ENCODE measurements at regions of chr9 and their contacts with region 1.

Region 1: DNA sequence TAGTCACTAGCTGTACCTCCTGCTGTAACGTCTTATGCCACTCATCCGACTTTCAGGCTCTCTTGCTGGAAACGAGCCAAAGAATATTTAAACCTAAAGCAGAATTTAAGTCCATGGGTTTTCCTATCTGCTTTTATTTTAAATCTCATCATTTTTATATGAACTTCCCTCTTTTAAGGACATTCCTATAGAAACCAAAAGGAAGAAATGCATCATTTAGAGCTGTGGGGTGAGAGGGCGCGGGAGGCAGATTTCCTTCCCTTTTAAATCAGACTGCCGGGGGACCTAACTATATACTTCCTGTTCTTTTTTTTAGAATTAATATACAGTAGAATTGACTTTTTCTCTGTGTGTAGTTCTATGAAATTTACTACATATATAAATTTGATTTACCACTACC is 468.8 kb downstream of the BNC2 start:
- DNase-seq: no peak
- ATAC-seq: peak in 1 of 4 donors; percentile 31
- H3K4me3 ChIP-seq: no peak overlapping the region
- H3K27ac ChIP-seq: no peak overlapping the region
- H3K4me1 ChIP-seq: no peaks in the 10 kb centered on the region
- H3K27me3 ChIP-seq: no peaks in the 10 kb centered on the region
- CTCF ChIP-seq: no peak

Region 2: DNA sequence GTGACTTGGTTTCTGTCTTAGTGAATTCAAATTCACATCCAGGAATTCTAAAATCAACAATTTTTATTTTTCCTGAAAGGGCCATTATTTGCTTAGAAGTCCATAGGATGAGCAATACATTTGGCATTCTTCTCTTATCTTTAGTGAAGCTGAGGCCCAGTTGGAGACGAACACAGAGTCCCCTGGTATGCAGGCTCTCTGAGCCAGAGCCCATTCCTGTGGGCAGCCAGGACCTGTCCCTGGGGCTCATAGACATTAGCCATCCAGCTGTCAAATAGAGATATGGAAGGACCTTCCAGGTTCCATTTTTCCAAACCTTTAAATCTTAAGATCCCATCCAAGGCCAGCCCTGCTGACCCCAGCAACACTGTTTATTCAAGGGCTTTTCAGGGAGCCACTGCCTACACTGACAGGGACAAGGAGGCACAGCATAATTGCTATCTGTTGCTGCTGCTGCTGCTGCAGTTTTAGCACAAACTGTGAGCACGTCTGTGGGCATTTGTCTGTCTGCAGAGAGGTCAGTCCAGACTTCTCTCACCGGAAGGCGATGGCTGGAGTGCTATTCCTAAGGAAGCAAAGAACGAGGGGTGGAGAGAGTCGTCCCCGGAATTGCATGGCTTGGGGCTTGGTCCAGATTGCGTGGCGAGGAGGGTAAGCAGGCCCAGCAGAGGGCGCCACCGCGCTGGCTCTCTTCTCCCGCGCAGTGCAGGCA is 209.9 kb before region 1 on chr9:
- intact Hi-C with region 1: loop called in 1 of 3 experiments (anchors 10 kb)
- DNase-seq: peak in 5 of 6 donors; percentile 16 to 87 (median 57)
- ATAC-seq: peak; percentile 68 to 95 (median 86)
- H3K4me3 ChIP-seq: no peak overlapping the region
- H3K27ac ChIP-seq: no peak overlapping the region
- H3K4me1 ChIP-seq: no peaks in the 10 kb centered on the region
- H3K27me3 ChIP-seq: no peaks in the 10 kb centered on the region
- CTCF ChIP-seq: peak; percentile 26 to 55 (median 48)